ENCODE measurements at regions of chr17 and their contacts with region 1.

Region 1: DNA sequence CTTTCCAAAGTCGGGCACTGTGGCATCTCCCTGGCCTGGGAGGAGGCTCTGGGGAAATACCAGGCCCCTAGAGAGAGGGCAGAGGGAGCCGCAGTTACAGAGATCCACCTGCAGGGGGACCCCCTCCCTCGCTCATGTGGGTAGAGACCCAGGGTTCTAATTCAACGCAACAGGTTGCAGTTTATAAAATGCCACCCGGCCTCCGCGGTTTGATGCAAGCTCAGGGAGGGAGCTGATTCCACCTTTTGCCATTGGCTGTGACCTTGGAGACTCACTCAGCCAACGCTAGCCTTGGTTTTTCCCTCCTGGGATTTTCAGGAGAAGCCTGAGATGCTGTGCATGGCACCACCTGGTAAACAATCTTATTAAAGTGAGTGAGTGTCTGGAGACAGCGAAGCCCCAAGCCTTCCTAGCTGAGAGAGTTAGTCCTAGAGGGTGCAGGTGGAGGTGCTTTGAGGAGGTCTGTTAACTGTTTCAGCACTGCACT is 12.1 kb downstream of the TTLL6 start:
- DNase-seq: peak in 1 of 2 donors; percentile 18
- ATAC-seq: peak; percentile 30 to 62
- H3K4me3 ChIP-seq: no peak overlapping the region
- H3K27ac ChIP-seq: no peak overlapping the region
- H3K4me1 ChIP-seq: peaks cover 0 to 5% of the 10 kb centered on the region in 2 donors
- H3K27me3 ChIP-seq: no peaks in the 10 kb centered on the region
- CTCF ChIP-seq: peak; percentile 78 to 92 (median 88)
- POLR2A ChIP-seq: no peak

Region 2: DNA sequence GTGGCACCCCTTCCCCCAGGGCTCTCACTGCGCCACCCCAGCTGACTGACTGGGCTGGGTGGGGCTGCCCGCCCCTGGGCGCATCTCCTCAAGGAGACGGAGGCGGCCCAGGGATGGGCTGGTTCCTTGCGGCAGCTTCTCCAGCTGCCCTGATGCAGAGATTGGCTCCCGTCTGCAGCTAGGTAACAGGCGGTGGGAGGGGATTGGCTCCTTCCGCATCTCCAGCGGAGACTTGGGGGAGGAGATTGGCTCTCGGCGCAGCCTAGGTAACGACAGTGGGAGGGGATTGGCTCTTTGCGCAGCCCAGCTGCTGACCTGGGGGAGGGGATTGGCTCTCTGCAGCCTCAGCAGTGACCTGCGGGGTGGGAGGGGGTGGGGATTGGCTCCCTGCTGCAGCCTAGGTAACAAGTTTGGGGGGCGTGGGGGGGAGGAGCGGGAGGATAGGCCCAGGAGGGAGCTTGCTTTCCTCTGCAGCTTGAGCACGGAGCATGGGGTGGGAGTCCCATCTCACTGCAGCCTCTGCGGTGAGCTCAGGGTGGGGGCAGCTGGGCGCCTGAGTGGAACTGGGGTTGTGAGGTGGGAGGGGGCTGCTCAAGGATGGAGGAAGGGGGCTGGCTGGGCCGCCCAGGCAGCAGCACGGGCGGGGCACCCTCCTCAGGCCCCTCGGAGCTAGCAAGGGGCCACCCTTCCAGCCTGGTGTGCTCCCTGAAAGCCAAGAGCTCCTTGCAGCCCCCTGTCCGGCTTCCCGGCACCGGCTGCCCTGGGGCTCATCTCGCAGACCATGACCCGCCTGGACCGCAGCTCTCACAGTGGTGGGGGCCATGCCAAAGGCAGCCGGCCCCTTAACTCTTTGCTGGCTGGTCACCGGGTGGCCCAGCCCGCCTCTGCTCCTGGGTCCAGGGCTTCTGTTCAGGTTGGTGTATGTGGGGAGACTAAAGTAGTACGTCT is 750.5 kb before region 1 on chr17:
- in situ Hi-C with region 1: no loop called
- intact Hi-C with region 1: no loop called
- DNase-seq: peak; percentile 95 to 97
- ATAC-seq: peak; percentile 36 to 41
- H3K4me3 ChIP-seq: peak overlapping the region; percentile 73 to 93 (median 84)
- H3K27ac ChIP-seq: peak overlapping the region; percentile 96 to 99 (median 97)
- H3K4me1 ChIP-seq: peaks cover 80 to 87% of the 10 kb centered on the region in 2 donors
- H3K27me3 ChIP-seq: no peaks in the 10 kb centered on the region
- CTCF ChIP-seq: no peak
- POLR2A ChIP-seq: peak; percentile 83 to 91

Region 3: GRCh38 chr17:48663134-48663924 is 141.6 kb before region 1 on chr17:
- in situ Hi-C with region 1: loop called in 1 of 4 experiments (anchors 10 kb)
- intact Hi-C with region 1: no loop called
- DNase-seq: no peak
- ATAC-seq: no peak
- H3K4me3 ChIP-seq: no peak overlapping the region
- H3K27ac ChIP-seq: no peak overlapping the region
- H3K4me1 ChIP-seq: no peaks in the 10 kb centered on the region
- H3K27me3 ChIP-seq: peaks cover 7 to 21% (median 15%) of the 10 kb centered on the region in 3 donors
- CTCF ChIP-seq: no peak
- POLR2A ChIP-seq: no peak